ENCODE measurements at regions of chr18 and their contacts with region 1.

Region 1: DNA sequence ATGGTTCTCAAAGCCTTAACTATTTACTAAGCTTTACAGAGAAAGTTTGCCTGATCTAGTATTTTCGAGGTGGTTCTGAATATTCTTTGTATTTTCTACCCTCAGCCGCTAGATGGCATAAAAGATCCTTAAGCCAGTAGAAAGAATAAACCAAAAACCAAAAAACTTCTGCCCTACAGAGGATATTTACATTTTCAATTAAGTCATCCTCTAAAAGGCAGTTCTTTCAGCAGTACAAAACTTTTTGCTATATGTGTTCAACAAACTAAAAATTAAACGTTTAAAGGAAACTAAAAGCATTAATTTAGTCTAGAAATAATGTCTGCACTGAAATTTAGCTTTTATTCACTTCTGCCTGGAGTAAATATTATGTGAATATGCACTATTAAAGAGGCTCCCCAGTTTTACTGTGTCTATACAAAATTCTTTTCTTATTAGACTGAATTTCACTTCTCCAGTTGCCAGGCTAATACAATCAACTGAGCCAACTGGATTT is 297.5 kb downstream of the PIEZO2 start:
- DNase-seq: peak in 1 of 4 donors; percentile 6
- ATAC-seq: peak; percentile 45
- H3K4me3 ChIP-seq: no peak overlapping the region
- H3K27ac ChIP-seq: no peak overlapping the region
- H3K4me1 ChIP-seq: peaks cover 5% of the 10 kb centered on the region
- H3K27me3 ChIP-seq: no peaks in the 10 kb centered on the region
- CTCF ChIP-seq: peak in 6 of 7 experiments; percentile 61 to 84 (median 80)
- POLR2A ChIP-seq: no peak

Region 2: DNA sequence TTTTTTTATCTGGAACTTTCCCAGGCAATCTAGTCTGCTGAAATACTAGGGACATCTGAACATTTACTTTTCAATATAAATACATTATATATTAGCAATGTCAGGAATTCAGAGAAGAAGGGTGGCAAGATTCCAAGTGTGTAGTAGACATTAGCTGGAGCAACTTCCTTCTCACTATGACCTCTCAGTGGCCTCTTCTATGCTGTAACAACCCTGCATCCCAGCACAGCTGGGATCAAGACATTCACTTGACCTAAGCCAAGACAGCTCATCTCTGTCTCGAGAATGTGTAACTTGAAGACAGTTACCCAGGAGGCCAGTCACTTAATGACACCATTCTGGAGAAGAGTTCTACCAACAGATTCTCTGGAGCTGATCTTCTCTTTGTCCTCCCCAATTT is 1438.3 kb before region 1 on chr18:
- intact Hi-C with region 1: no loop called
- DNase-seq: no peak
- ATAC-seq: no peak
- H3K4me3 ChIP-seq: no peak overlapping the region
- H3K27ac ChIP-seq: no peak overlapping the region
- H3K4me1 ChIP-seq: no peaks in the 10 kb centered on the region
- H3K27me3 ChIP-seq: no peaks in the 10 kb centered on the region
- CTCF ChIP-seq: no peak
- POLR2A ChIP-seq: no peak

Region 3: GRCh38 chr18:10936176-10937053 is 84.5 kb after region 1 on chr18:
- intact Hi-C with region 1: no loop called
- DNase-seq: no peak
- ATAC-seq: no peak
- H3K4me3 ChIP-seq: no peak overlapping the region
- H3K27ac ChIP-seq: no peak overlapping the region
- H3K4me1 ChIP-seq: no peaks in the 10 kb centered on the region
- H3K27me3 ChIP-seq: no peaks in the 10 kb centered on the region
- CTCF ChIP-seq: no peak
- POLR2A ChIP-seq: no peak

Region 4: GRCh38 chr18:11034884-11035283 is 183.0 kb after region 1 on chr18:
- intact Hi-C with region 1: loop called (anchors 10 kb)
- DNase-seq: peak in 1 of 4 donors; percentile 38
- ATAC-seq: peak; percentile 27
- H3K4me3 ChIP-seq: no peak overlapping the region
- H3K27ac ChIP-seq: no peak overlapping the region
- H3K4me1 ChIP-seq: peaks cover 8% of the 10 kb centered on the region
- H3K27me3 ChIP-seq: no peaks in the 10 kb centered on the region
- CTCF ChIP-seq: no peak
- POLR2A ChIP-seq: no peak

Measured in body of pancreas (tissue), 4 donors.